Panc1 (cell line): ENCODE measurements at regions of chrX and their contacts with region 1.

Region 1: DNA sequence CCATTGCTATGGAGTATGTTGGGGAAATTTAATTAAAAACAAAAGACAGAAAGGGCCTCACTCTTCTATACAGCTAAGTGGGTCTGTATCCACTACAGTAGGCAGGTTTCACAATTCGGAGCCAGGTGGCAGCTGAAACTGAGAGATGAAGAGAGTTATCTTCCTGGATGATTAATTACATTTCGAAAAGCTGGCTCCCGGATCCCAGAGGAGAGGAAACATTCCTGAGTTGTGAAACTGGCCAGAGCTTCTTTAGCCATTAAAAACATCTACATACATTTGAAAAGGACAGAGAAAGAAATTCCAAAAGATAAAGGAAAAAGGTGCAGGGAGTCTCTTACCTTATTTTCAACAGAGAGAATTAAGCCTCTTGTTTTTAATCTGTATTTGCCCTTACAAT is 15.5 kb upstream of the PDZD4 start:
- DNase-seq: no peak
- ATAC-seq: no peak
- H3K4me3 ChIP-seq: no peak overlapping the region
- H3K27ac ChIP-seq: no peak overlapping the region
- H3K4me1 ChIP-seq: no peaks in the 10 kb centered on the region
- H3K27me3 ChIP-seq: peaks cover 5% of the 10 kb centered on the region; the same call in 1 of the 2 replicates
- CTCF ChIP-seq: no peak

Region 2: GRCh38 chrX:153703036-153703370 is 142.8 kb before region 1 on chrX:
- CTCF ChIA-PET with region 1: no interaction called
- POLR2A ChIA-PET with region 1: no interaction called
- in situ Hi-C with region 1: no loop called
- intact Hi-C with region 1: no loop called
- DNase-seq: no peak
- ATAC-seq: no peak
- H3K4me3 ChIP-seq: no peak overlapping the region
- H3K27ac ChIP-seq: no peak overlapping the region
- H3K4me1 ChIP-seq: no peaks in the 10 kb centered on the region
- H3K27me3 ChIP-seq: no peaks in the 10 kb centered on the region
- CTCF ChIP-seq: no peak

Region 3: GRCh38 chrX:153818571-153819383 is 27.1 kb before region 1 on chrX:
- CTCF ChIA-PET with region 1: no interaction called
- POLR2A ChIA-PET with region 1: interaction called, 16 read pairs
- in situ Hi-C with region 1: no loop called
- intact Hi-C with region 1: no loop called
- DNase-seq: no peak
- ATAC-seq: peak; percentile 92
- H3K4me3 ChIP-seq: peak overlapping the region; percentile 46 to 63
- H3K27ac ChIP-seq: peak overlapping the region; percentile 84
- H3K4me1 ChIP-seq: peaks cover 30% of the 10 kb centered on the region
- H3K27me3 ChIP-seq: no peaks in the 10 kb centered on the region
- CTCF ChIP-seq: no peak

Region 4: GRCh38 chrX:153869473-153870287 is 23.8 kb after region 1 on chrX:
- CTCF ChIA-PET with region 1: no interaction called
- POLR2A ChIA-PET with region 1: interaction called, 13 read pairs
- in situ Hi-C with region 1: no loop called
- intact Hi-C with region 1: no loop called
- DNase-seq: no peak
- ATAC-seq: no peak
- H3K4me3 ChIP-seq: no peak overlapping the region
- H3K27ac ChIP-seq: no peak overlapping the region
- H3K4me1 ChIP-seq: peaks cover 10% of the 10 kb centered on the region
- H3K27me3 ChIP-seq: no peaks in the 10 kb centered on the region
- CTCF ChIP-seq: no peak